Caco-2 (cell line): ENCODE measurements at regions of chr3 and their contacts with region 1.

Region 1: DNA sequence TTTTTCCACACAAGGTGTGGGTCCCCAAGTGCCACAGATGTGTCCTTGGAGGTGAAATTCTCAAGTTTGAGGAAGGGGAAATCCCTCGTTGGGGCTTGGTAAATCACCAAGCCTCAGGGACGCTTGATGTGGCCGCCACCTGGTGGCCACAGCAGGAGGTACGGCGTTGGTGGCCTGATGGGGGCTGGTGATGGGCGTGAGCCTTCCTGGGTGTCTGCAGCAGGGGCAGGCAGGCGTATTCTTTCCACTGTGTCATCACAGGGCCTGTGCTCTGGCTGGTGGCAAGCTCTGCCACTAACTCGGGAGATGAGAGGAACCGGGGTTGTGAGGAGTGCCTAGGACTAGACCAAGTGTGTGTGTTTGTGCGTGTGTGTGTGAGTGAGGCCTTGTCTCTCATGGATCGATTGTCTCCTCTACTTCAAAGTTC is 4.2 kb downstream of the ACOX2 start:
- DNase-seq: peak; percentile 74 to 81
- H3K4me3 ChIP-seq: no peak overlapping the region
- H3K4me3 Mint-ChIP-seq: no peak overlapping the region
- H3K27ac Mint-ChIP-seq: peak overlapping the region; percentile 39
- H3K4me1 ChIP-seq: peaks cover 41% of the 10 kb centered on the region
- H3K4me1 Mint-ChIP-seq: peaks cover 34% of the 10 kb centered on the region
- H3K27me3 ChIP-seq: no peaks in the 10 kb centered on the region
- H3K27me3 Mint-ChIP-seq: no peaks in the 10 kb centered on the region
- CTCF ChIP-seq: peak; percentile 86 to 94

Region 2: DNA sequence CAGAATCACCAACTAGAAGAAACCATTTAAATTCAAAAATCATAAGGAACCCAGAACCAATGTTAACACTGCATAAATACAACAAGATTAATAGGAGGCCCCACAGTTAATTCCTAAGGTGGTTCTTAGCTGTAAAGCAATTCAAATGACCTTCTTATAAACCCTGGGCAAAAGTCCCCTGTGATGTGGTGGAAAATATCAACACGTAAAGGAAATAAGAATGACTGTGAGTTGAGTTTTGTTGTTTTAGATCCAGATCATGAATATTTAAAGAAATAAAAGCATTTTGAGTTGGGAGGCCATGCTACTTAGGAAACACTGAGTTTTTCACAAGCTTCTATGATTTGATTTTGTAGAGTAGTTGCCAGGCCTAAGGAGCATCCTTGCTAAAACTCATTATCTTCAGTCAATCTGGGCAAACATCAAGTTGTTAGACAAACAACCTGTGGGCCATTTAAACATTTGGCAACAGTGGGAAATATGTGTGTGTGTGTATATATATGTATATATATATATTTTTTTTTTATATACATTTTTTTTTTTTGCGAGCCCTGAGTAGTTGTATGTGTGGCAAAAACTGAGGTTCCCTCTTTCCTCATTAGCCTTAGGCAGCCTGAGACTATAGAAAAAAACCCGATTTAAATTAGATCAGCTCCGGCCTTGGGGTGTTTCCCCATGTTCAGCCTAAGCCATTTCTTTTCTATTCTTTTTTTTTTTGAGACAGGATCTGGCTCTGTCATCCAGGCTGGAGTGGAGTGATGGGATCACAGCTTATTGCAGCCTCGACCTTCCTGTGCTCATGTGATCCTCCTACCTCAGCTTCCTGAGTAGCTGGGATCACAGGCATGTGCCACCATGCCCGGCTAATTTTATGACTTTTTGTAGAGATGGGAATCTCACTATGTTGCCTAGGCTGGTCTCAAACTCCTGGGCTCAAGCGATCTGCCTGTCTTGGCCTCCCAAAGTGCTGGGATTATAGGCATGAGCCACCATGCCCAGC is 208.1 kb before region 1 on chr3:
- CTCF ChIA-PET with region 1: interaction called, 4 read pairs
- POLR2A ChIA-PET with region 1: no interaction called
- intact Hi-C with region 1: loop called (anchors 5 kb)
- DNase-seq: no peak
- H3K4me3 ChIP-seq: no peak overlapping the region
- H3K4me3 Mint-ChIP-seq: no peak overlapping the region
- H3K27ac Mint-ChIP-seq: no peak overlapping the region
- H3K4me1 ChIP-seq: peaks cover 17% of the 10 kb centered on the region
- H3K4me1 Mint-ChIP-seq: peaks cover 6% of the 10 kb centered on the region
- H3K27me3 ChIP-seq: no peaks in the 10 kb centered on the region
- H3K27me3 Mint-ChIP-seq: no peaks in the 10 kb centered on the region
- CTCF ChIP-seq: no peak

Region 3: DNA sequence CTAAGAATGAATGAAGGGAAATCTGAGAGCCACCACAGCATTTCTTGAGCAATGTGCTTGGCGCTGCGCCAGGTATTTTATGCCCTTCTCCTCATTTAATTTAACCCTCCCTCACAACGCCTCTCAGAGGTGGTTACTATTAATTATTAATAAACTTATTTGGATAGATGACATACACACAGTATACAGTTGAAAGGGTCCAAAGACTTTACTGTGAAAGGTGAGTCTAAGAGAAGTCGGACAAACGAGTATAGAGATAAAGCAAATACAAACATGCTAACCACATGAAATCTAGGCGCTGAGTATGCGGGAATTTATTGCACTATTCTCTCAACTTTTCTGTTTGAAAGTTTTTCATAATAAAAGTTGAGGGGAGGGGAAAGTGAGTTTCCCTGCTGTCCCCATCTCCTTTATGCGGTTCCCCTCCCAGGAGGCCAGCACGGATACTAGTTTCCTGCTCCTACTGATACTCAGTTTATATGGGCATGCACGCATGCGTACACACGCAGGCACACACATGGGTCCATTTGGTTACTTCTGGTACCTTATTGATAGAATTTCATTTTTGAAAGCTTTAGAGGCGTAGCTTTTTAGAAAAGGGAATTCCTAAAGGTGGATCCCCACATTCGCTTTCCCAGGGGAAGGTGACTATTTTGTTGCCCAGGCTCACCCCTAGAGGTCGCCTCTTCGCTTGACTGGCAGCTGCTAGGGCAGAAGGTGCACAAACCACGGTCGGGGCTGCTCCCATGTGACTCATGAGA is 69.4 kb before region 1 on chr3:
- CTCF ChIA-PET with region 1: no interaction called
- POLR2A ChIA-PET with region 1: no interaction called
- intact Hi-C with region 1: loop called (anchors 2 kb)
- DNase-seq: peak; percentile 80 to 83
- H3K4me3 ChIP-seq: no peak overlapping the region
- H3K4me3 Mint-ChIP-seq: no peak overlapping the region
- H3K27ac Mint-ChIP-seq: no peak overlapping the region
- H3K4me1 ChIP-seq: peaks cover 11% of the 10 kb centered on the region
- H3K4me1 Mint-ChIP-seq: no peaks in the 10 kb centered on the region
- H3K27me3 ChIP-seq: no peaks in the 10 kb centered on the region
- H3K27me3 Mint-ChIP-seq: no peaks in the 10 kb centered on the region
- CTCF ChIP-seq: peak; percentile 88 to 90

Region 4: GRCh38 chr3:58491506-58492402 is 41.1 kb before region 1 on chr3 and contains the start of gene KCTD6:
- CTCF ChIA-PET with region 1: interaction called, 4 read pairs
- POLR2A ChIA-PET with region 1: no interaction called
- intact Hi-C with region 1: loop called (anchors 1 kb)
- DNase-seq: peak; percentile 90 to 96
- H3K4me3 ChIP-seq: peak within 1 kb of the TSS; percentile 51
- H3K4me3 Mint-ChIP-seq: peak within 1 kb of the TSS; percentile 94
- H3K27ac Mint-ChIP-seq: peak within 1 kb of the TSS; percentile 87
- H3K4me1 ChIP-seq: peaks cover 26% of the 10 kb centered on the region
- H3K4me1 Mint-ChIP-seq: peaks cover 23% of the 10 kb centered on the region
- H3K27me3 ChIP-seq: no peaks in the 10 kb centered on the region
- H3K27me3 Mint-ChIP-seq: no peaks in the 10 kb centered on the region
- CTCF ChIP-seq: peak; percentile 70 to 73
- total RNA-seq, gene KCTD6: 9.2 and 9.8 TPM in 2 replicates

Region 5: GRCh38 chr3:58560771-58561311 is 28.0 kb after region 1 on chr3:
- CTCF ChIA-PET with region 1: interaction called, 5 read pairs
- POLR2A ChIA-PET with region 1: interaction called, 3 read pairs
- intact Hi-C with region 1: loop called (anchors 1 kb)
- DNase-seq: peak; percentile 86
- H3K4me3 ChIP-seq: no peak overlapping the region
- H3K4me3 Mint-ChIP-seq: peak overlapping the region; percentile 33
- H3K27ac Mint-ChIP-seq: peak overlapping the region; percentile 91
- H3K4me1 ChIP-seq: peaks cover 42% of the 10 kb centered on the region
- H3K4me1 Mint-ChIP-seq: peaks cover 38% of the 10 kb centered on the region
- H3K27me3 ChIP-seq: no peaks in the 10 kb centered on the region
- H3K27me3 Mint-ChIP-seq: no peaks in the 10 kb centered on the region
- CTCF ChIP-seq: peak; percentile 43 to 51